Activated CD4-positive, alpha-beta T cell treated with anti-CD3 and anti-CD28 coated beads for 36 hours (primary cell): ENCODE measurements at regions of chr1 and their contacts with region 1.

Region 1: GRCh38 chr1:98783821-98784220 is 122.3 kb downstream of the SNX7 start:
- DNase-seq: no peak
- ATAC-seq: no peak
- H3K4me3 Mint-ChIP-seq: no peak overlapping the region
- H3K27ac Mint-ChIP-seq: no peak overlapping the region
- H3K4me1 Mint-ChIP-seq: no peaks in the 10 kb centered on the region
- H3K27me3 Mint-ChIP-seq: peaks cover 9% of the 10 kb centered on the region

Region 2: DNA sequence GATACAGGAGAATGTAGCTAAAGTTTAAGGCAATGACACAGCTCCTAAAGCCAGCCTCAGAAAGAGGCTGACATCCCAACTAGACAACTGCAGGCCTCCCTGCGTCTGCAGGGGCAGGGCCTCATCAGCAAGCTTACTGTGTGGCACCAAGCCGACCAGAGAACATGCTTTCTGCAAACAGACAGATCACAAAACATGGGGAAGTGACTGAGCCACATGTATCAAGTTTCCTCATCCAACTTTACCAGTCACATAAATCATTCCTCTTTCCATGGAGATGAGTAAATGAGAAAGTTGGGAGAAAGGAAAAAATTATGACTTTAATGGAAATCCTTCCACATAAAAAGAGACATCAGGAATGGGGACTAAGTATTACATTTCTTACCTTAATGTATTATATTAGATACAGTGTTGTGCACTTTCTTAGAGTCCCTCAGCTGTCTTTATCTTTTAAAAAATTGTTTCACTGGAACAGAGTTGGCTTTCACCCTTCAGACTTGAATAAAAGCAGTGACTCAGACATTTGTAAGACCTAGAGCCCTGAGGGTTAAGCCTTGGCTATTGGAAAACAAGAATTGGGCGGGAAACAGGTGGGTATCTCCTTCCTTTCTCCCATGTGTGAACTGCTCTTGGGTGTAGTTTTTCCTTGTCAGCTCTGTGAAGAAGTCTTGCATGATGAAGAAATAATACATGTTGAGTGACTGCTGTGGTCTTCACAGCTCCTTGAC is 428.0 kb before region 1 on chr1:
- CTCF ChIA-PET with region 1: no interaction called
- POLR2A ChIA-PET with region 1: no interaction called
- intact Hi-C with region 1: no loop called
- DNase-seq: no peak
- ATAC-seq: no peak
- H3K4me3 Mint-ChIP-seq: no peak overlapping the region
- H3K27ac Mint-ChIP-seq: no peak overlapping the region
- H3K4me1 Mint-ChIP-seq: peaks cover 5% of the 10 kb centered on the region
- H3K27me3 Mint-ChIP-seq: no peaks in the 10 kb centered on the region

Region 3: DNA sequence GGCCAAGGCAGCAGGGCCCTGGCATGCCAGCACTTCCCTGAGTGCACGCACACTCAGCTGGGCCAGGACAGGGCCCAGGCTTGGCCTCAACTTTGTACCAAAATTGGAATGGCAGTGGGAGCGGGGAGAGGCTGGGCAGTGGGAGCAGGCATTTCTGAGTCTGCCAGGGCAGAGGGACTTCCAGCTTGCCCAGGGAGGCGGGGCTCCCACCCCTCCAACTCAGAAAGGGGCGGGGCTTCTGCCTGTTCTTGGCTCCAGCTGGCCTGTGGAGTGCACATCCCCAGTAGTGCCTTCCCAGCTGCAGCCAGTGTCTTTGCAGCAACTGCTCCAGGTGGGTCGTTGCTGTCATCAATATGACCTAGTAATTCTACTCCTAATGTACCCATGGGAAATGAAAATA is 132.6 kb before region 1 on chr1:
- CTCF ChIA-PET with region 1: no interaction called
- POLR2A ChIA-PET with region 1: no interaction called
- intact Hi-C with region 1: no loop called
- DNase-seq: no peak
- ATAC-seq: no peak
- H3K4me3 Mint-ChIP-seq: no peak overlapping the region
- H3K27ac Mint-ChIP-seq: no peak overlapping the region
- H3K4me1 Mint-ChIP-seq: no peaks in the 10 kb centered on the region
- H3K27me3 Mint-ChIP-seq: no peaks in the 10 kb centered on the region

Region 4: GRCh38 chr1:99051611-99052283 is 267.9 kb after region 1 on chr1:
- CTCF ChIA-PET with region 1: no interaction called
- POLR2A ChIA-PET with region 1: no interaction called
- intact Hi-C with region 1: no loop called
- DNase-seq: no peak
- ATAC-seq: no peak
- H3K4me3 Mint-ChIP-seq: no peak overlapping the region
- H3K27ac Mint-ChIP-seq: no peak overlapping the region
- H3K4me1 Mint-ChIP-seq: no peaks in the 10 kb centered on the region
- H3K27me3 Mint-ChIP-seq: peaks cover 3% of the 10 kb centered on the region

Region 5: DNA sequence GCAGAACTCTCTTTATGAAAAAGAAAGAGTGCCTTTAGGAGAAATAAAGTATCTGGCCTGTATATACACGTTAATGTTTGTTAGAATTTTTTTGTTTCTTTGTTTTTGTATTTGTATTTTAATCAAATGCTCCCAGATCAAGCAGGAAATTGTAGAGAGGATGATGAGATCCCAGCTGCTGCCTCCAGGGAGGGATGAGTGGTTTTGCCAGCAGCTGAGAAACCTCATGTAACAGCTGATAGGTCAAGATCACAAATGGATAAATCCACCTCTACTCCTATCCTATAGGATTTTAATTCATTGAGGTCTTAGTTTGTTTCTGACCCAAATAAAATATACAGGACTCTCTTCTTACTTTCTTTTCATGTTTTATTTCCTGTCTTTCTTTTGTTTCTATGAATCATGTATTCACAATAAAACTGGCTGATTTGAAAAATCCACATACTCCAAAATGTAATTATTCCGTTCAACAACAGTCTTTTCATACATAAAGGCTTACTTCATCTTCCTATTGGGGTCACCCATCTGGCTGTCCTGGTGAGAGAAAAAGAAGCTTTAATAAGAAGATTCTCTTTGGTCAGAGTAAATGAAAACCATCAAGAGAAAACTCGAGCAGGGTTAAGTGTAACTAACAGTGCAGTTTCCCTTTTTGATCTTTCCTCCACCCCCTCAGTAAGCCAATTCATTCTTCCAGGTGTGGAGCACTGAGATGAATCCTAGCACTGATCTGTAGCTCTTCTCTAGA is 350.1 kb after region 1 on chr1:
- CTCF ChIA-PET with region 1: no interaction called
- POLR2A ChIA-PET with region 1: no interaction called
- intact Hi-C with region 1: loop called in 1 of 2 experiments (anchors 10 kb)
- DNase-seq: no peak
- ATAC-seq: no peak
- H3K4me3 Mint-ChIP-seq: no peak overlapping the region
- H3K27ac Mint-ChIP-seq: no peak overlapping the region
- H3K4me1 Mint-ChIP-seq: no peaks in the 10 kb centered on the region
- H3K27me3 Mint-ChIP-seq: peaks cover 11% of the 10 kb centered on the region